Dendritic cell treated with granulocyte-macrophage colony-stimulating factor and Interleukin-4, amounts not matched to agents 40 ng/mL and 50 ng/mL, for 4 days (primary cell): ENCODE measurements at regions of chr3 and their contacts with region 1.

Region 1: DNA sequence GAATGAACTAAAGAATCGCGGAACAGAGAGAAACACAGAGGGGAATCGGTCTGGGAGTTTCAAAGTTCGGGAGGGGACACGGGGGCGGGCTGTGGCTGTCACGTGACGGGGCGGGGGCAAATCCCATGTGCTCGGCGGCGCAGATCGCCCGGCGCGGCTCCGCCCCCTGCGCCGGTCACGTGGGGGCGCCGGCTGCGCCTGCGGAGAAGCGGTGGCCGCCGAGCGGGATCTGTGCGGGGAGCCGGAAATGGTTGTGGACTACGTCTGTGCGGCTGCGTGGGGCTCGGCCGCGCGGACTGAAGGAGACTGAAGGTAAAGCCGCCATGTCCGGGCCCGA is at the start of gene EIF4G1:
- H3K4me3 Mint-ChIP-seq: peak within 1 kb of the TSS; percentile 80
- H3K27ac Mint-ChIP-seq: peak within 1 kb of the TSS; percentile 72
- H3K4me1 Mint-ChIP-seq: peaks cover 34% of the 10 kb centered on the region
- H3K27me3 Mint-ChIP-seq: no peaks in the 10 kb centered on the region

Region 2: DNA sequence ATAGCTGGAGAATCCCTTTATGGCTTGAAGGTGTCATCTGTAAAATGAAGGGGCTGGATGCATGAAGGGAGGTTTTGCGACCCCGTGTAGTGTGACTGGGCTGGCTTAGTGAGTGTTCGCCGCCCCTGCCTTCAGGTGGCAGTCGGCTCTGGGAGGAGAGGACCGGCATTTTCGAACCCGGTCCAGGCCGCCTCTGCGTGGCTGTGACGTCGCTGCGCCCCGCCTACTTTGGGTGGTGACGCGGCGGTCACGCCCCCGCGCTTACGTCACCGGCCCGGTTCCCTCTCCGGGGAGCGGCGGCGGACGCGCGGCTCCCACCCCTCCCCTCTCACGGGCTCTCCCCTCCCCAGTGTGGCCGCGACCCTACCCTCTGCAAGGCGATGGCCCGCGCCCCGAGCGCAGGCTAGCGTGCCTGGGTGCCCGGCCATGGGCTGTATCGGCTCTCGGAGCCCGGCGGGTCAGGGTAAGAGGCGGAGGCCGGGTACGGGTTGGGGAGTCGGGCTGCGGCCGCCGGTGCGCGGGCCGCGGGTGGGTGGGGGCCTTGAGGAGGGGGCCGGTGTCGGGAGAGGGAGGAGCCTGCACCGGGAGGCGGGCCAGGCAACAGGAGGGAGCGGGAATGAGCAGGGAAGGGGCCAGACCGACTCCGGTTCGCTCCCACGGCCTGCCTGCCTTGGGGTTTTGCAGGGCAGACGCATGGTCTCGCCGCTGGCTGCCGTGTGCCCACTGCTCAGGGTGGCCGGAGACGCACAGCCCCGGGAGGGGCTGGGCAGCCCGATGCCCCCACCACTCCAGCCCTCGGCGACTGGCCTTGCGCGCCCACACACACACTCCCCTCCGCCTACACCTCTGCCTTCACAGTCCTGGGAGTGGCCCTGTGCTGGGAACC is 21.6 kb after region 1 on chr3:
- intact Hi-C with region 1: loop called (anchors 2 kb)
- H3K4me3 Mint-ChIP-seq: peak overlapping the region; percentile 82
- H3K27ac Mint-ChIP-seq: peak overlapping the region; percentile 90
- H3K4me1 Mint-ChIP-seq: peaks cover 70% of the 10 kb centered on the region
- H3K27me3 Mint-ChIP-seq: no peaks in the 10 kb centered on the region

Region 3: GRCh38 chr3:184570489-184570888 is 256.2 kb after region 1 on chr3:
- intact Hi-C with region 1: no loop called
- H3K4me3 Mint-ChIP-seq: no peak overlapping the region
- H3K27ac Mint-ChIP-seq: no peak overlapping the region
- H3K4me1 Mint-ChIP-seq: peaks cover 35% of the 10 kb centered on the region
- H3K27me3 Mint-ChIP-seq: peaks cover 38% of the 10 kb centered on the region

Region 4: DNA sequence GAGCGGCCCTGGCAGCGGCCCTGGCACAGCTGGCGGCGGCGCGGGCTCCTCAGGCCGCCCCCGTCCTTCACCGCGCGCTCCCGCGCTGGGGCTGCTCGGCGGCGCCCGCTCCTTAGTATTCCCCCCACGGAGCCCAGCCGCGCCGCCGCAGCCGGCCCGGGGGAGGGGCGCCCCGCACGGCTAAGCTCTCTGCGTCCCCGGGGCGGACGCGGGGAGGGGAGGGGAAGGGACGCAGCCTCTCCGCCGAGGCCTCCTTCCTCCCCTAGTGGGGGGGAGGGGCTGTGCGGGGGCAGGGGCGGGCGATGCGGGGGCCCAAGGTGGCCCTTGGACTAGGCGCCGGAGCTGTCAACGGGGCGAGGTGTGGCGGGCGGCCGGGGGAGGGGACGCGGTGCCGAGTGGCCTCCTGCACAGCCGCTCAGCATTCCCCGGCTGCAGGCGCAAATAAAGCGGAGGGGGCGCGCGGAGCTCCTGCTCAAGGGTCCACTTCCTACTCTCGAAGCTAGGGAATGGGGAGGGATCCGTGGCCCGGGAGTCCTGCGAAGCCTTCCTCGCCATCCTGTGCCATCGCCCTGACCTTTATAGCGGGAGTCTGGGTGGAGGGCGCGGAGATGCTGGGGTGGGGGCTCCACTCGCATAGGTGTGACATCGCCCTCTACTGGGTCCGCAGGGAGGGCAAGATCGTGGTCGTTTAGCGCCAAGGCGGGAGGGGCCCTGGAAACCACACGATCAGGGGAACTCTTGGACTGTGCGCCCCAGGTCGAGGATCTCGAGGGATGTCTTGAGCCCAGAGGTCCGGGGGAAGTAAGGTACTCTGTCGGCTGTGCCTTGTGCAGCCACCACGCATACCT is 269.5 kb after region 1 on chr3:
- intact Hi-C with region 1: no loop called
- H3K4me3 Mint-ChIP-seq: peak overlapping the region; percentile 48
- H3K27ac Mint-ChIP-seq: no peak overlapping the region
- H3K4me1 Mint-ChIP-seq: peaks cover 55% of the 10 kb centered on the region
- H3K27me3 Mint-ChIP-seq: peaks cover 43% of the 10 kb centered on the region